ENCODE measurements at regions of chr6 and their contacts with region 1.

Region 1: GRCh38 chr6:26103770-26104456 is 16.7 kb downstream of the HFE start:
- DNase-seq: peak; percentile 80 to 83
- H3K4me3 ChIP-seq: peak overlapping the region; percentile 41 to 63 (median 52)
- H3K27ac ChIP-seq: peak overlapping the region; percentile 92
- H3K4me1 ChIP-seq: peaks cover 0 to 3% (median 0%) of the 10 kb centered on the region in 4 experiments; a peak in 2 of 7 replicates
- H3K27me3 ChIP-seq: no peaks in the 10 kb centered on the region
- CTCF ChIP-seq: peak in 2 of 3 experiments; percentile 26 to 37; a peak in 3 of 4 replicates
- EP300 ChIP-seq: peak in 1 of 2 experiments; percentile 96; a peak in 1 of 3 replicates
- POLR2A ChIP-seq: peak; percentile 98 to 99
- RAD21 ChIP-seq: no peak; a peak in 1 of 4 replicates

Region 2: GRCh38 chr6:26025894-26026832 is 77.8 kb before region 1 on chr6:
- CTCF ChIA-PET with region 1: interaction called, 9 read pairs
- POLR2A ChIA-PET with region 1: interaction called, 336 read pairs
- DNase-seq: peak; percentile 90 to 93
- H3K4me3 ChIP-seq: peak overlapping the region; percentile 75 to 89 (median 82)
- H3K27ac ChIP-seq: peak overlapping the region; percentile 80
- H3K4me1 ChIP-seq: peaks cover 3 to 26% (median 10%) of the 10 kb centered on the region in 4 experiments; a peak in 5 of 7 replicates
- H3K27me3 ChIP-seq: no peaks in the 10 kb centered on the region
- CTCF ChIP-seq: peak; percentile 63 to 93 (median 77)
- EP300 ChIP-seq: peak in 1 of 2 experiments; percentile 43; a peak in 1 of 3 replicates
- POLR2A ChIP-seq: peak; percentile 85 to 91; a peak in 2 of 3 replicates
- RAD21 ChIP-seq: peak; percentile 45 to 47

Region 3: GRCh38 chr6:26054857-26055669 is 48.9 kb before region 1 on chr6:
- CTCF ChIA-PET with region 1: interaction called, 481 read pairs
- POLR2A ChIA-PET with region 1: interaction called, 219 read pairs
- DNase-seq: peak; percentile 73 to 75
- H3K4me3 ChIP-seq: peak overlapping the region; percentile 82 to 95 (median 83)
- H3K27ac ChIP-seq: peak overlapping the region; percentile 93
- H3K4me1 ChIP-seq: peaks cover 0 to 3% (median 0%) of the 10 kb centered on the region in 4 experiments; a peak in 1 of 7 replicates
- H3K27me3 ChIP-seq: no peaks in the 10 kb centered on the region
- CTCF ChIP-seq: no peak
- EP300 ChIP-seq: no peak
- POLR2A ChIP-seq: peak; percentile 95 to 97
- RAD21 ChIP-seq: peak; percentile 14 to 29; a peak in 2 of 4 replicates

Region 4: GRCh38 chr6:26087284-26088115 is 16.4 kb before region 1 on chr6 and contains the start of gene HFE:
- CTCF ChIA-PET with region 1: interaction called, 10 read pairs
- POLR2A ChIA-PET with region 1: interaction called, 19 read pairs
- DNase-seq: peak in 1 of 2 experiments; percentile 73
- H3K4me3 ChIP-seq: peak within 1 kb of the TSS; percentile 48 to 65 (median 62)
- H3K27ac ChIP-seq: no peak within 1 kb of the TSS
- H3K4me1 ChIP-seq: peaks cover 0 to 5% (median 1%) of the 10 kb centered on the region in 4 experiments; a peak in 3 of 7 replicates
- H3K27me3 ChIP-seq: no peaks in the 10 kb centered on the region
- CTCF ChIP-seq: peak in 1 of 3 experiments; percentile 1; a peak in 1 of 4 replicates
- EP300 ChIP-seq: no peak
- POLR2A ChIP-seq: peak in 1 of 2 experiments; percentile 55; a peak in 1 of 3 replicates
- RAD21 ChIP-seq: no peak
- total RNA-seq, gene HFE: 1.6 and 2.0 TPM in 2 replicates

Region 5: DNA sequence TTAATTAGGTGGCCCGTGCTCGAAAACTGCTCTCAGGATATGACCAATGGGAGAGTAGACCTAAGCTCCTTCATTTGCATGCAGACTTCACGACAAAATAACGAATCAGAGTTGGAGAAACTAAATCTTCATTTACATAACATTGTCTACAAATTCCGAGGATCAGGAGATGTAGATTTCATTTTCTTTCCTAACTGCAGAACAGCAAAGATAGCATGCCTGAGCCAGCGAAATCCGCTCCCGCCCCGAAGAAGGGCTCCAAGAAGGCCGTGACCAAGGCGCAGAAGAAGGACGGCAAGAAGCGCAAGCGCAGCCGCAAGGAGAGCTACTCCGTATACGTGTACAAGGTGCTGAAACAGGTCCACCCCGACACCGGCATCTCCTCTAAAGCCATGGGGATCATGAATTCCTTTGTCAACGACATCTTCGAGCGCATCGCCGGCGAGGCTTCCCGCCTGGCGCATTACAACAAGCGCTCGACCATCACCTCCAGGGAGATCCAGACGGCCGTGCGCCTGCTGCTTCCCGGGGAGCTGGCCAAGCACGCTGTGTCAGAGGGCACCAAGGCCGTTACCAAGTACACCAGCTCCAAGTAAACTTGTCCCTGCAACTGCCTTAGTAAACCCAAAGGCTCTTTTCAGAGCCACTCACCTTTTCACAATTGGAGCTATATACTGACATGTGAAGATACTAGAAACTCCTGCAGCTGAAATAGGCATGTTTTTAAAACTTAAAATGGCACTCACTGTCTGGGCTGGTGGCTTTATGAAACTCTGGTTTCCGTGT is 79.9 kb after region 1 on chr6:
- CTCF ChIA-PET with region 1: no interaction called
- POLR2A ChIA-PET with region 1: interaction called, 37 read pairs
- DNase-seq: peak in 1 of 2 experiments; percentile 82
- H3K4me3 ChIP-seq: peak overlapping the region; percentile 45 to 73 (median 70)
- H3K27ac ChIP-seq: peak overlapping the region; percentile 97
- H3K4me1 ChIP-seq: peaks cover 0 to 17% (median 8%) of the 10 kb centered on the region in 4 experiments; a peak in 5 of 7 replicates
- H3K27me3 ChIP-seq: no peaks in the 10 kb centered on the region
- CTCF ChIP-seq: no peak
- EP300 ChIP-seq: no peak
- POLR2A ChIP-seq: peak; percentile 94 to 99
- RAD21 ChIP-seq: no peak

Region 6: DNA sequence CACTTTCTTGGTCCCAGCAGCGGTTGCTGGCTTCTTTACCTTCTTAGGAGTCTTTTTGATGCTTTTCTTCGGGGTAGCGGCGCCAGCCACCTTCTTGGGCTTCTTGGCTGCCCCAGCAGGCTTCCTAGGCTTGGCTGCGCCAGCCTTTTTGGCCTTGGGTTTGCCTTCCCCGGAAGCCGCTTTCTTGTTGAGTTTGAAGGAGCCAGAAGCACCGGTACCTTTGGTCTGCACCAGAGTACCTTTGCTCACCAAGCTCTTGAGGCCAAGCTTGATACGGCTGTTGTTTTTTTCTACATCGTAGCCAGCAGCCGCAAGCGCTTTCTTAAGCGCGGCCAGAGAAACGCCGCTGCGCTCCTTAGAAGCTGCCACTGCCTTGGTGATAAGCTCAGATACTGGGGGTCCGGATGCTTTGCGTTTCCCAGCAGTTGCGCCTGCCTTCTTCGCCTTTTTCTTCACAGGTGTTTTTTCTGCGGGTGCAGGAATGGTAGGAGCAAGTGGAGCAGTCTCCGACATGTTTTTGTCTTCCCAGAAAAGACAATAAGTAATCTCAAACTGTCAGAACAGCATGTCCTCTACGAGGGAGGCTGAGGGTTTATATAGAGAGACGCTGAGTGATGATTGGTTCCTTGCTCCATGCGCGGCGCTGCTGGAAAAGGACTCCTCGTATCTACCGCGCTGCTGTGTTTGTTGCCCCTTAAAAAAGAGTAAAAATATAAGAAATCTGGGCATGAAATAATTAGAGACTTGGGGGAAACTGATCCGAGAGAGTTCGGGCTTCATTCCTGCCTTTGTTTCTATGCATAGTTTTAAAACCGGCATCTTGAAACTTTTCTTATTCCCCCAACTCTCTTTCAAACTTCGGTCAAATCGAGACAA is 130.7 kb after region 1 on chr6:
- CTCF ChIA-PET with region 1: no interaction called
- POLR2A ChIA-PET with region 1: interaction called, 10 read pairs
- DNase-seq: peak in 1 of 2 experiments; percentile 85
- H3K4me3 ChIP-seq: peak overlapping the region; percentile 83 to 91 (median 88)
- H3K27ac ChIP-seq: peak overlapping the region; percentile 93
- H3K4me1 ChIP-seq: peaks cover 0 to 3% (median 0%) of the 10 kb centered on the region in 4 experiments; a peak in 3 of 7 replicates
- H3K27me3 ChIP-seq: no peaks in the 10 kb centered on the region
- CTCF ChIP-seq: no peak
- EP300 ChIP-seq: no peak
- POLR2A ChIP-seq: peak; percentile 86
- RAD21 ChIP-seq: no peak

Region 7: DNA sequence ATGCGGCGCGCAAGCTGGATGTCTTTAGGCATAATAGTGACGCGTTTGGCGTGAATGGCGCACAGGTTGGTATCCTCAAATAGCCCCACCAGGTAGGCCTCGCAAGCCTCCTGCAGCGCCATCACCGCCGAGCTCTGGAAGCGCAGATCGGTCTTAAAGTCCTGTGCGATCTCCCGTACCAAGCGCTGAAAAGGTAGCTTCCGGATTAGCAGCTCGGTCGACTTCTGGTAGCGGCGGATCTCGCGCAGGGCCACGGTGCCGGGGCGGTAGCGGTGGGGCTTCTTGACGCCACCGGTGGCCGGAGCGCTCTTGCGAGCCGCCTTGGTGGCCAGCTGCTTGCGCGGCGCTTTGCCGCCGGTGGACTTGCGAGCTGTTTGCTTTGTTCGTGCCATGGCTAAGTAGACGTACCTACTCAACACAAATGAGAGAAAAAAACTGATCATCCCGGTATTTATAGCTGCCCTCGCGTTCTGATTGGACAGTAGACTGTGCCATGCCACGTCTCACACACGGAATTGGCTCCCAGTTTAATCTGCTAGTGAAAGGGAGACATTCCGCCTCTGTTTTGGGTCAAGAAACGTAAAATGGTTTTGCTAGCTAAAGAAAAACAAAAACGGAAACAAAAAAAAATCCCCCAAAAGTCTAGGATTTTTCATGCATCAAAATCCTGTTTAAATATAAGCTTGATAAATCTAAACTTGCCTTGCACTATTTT is 1768.2 kb after region 1 on chr6:
- CTCF ChIA-PET with region 1: no interaction called
- POLR2A ChIA-PET with region 1: interaction called, 14 read pairs
- DNase-seq: peak in 1 of 2 experiments; percentile 89
- H3K4me3 ChIP-seq: peak overlapping the region; percentile 61 to 73 (median 67)
- H3K27ac ChIP-seq: peak overlapping the region; percentile 96
- H3K4me1 ChIP-seq: peaks cover 0 to 16% (median 9%) of the 10 kb centered on the region in 4 experiments; a peak in 5 of 7 replicates
- H3K27me3 ChIP-seq: no peaks in the 10 kb centered on the region
- CTCF ChIP-seq: peak in 2 of 3 experiments; percentile 22 to 26; a peak in 3 of 4 replicates
- EP300 ChIP-seq: no peak; a peak in 1 of 3 replicates
- POLR2A ChIP-seq: peak; percentile 97 to 98
- RAD21 ChIP-seq: no peak